Natural killer cell (primary cell): ENCODE measurements at regions of chr5 and their contacts with region 1.

Region 1: GRCh38 chr5:95858661-95859326 is 36.3 kb upstream of the GLRX start:
- DNase-seq: peak; percentile 83 to 92
- ATAC-seq: peak; percentile 96 to 97 (median 96)
- H3K4me3 ChIP-seq: no peak overlapping the region
- H3K4me3 Mint-ChIP-seq: peak overlapping the region; percentile 35
- H3K27ac ChIP-seq: no peak overlapping the region
- H3K27ac Mint-ChIP-seq: peak overlapping the region; percentile 8 to 61
- H3K4me1 ChIP-seq: peaks cover 19% of the 10 kb centered on the region
- H3K4me1 Mint-ChIP-seq: peaks cover 7 to 17% of the 10 kb centered on the region in 2 donors
- H3K27me3 ChIP-seq: peaks cover 2% of the 10 kb centered on the region
- H3K27me3 Mint-ChIP-seq: peaks cover 31 to 46% of the 10 kb centered on the region in 2 donors
- CTCF ChIP-seq: peak; percentile 97

Region 2: GRCh38 chr5:96142786-96143434 is 284.1 kb after region 1 on chr5:
- intact Hi-C with region 1: no loop called
- DNase-seq: no peak
- ATAC-seq: no peak
- H3K4me3 ChIP-seq: no peak overlapping the region
- H3K4me3 Mint-ChIP-seq: no peak overlapping the region
- H3K27ac ChIP-seq: no peak overlapping the region
- H3K27ac Mint-ChIP-seq: no peak overlapping the region
- H3K4me1 ChIP-seq: no peaks in the 10 kb centered on the region
- H3K4me1 Mint-ChIP-seq: no peaks in the 10 kb centered on the region
- H3K27me3 ChIP-seq: no peaks in the 10 kb centered on the region
- H3K27me3 Mint-ChIP-seq: peaks cover 6 to 19% of the 10 kb centered on the region in 2 donors
- CTCF ChIP-seq: no peak

Region 3: DNA sequence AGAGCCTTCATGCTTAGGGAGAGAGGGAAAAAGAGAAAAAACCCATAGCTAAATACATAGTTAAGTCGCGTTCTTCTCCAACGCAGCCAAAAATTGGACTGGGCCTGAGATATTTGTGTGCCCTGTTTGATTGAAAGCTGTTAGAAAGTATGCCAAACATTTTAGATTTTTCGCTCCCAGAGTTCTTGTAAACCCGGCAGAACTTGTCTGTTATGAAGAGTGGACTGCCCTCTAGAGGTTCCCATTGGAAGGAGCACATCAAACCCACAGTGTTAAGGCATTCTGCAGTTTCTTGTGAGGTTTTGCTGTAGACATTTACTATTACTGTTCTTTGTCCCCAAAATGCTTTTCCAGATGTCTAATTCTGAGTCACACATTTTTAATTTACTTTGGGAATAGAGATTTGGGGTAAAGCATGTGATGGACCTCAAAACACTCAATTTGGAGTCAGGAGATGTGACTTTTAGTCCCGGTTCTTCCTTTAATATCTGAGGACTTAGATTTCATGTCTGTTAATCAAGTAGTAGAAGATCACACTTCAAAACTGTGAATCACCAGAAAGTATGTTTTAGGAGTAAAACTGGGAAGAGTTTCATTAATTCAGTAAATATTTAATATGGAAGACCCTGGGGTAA is 477.7 kb after region 1 on chr5:
- intact Hi-C with region 1: loop called (anchors 1 kb)
- DNase-seq: peak in 1 of 2 donors; percentile 84
- ATAC-seq: peak; percentile 87 to 96 (median 91)
- H3K4me3 ChIP-seq: no peak overlapping the region
- H3K4me3 Mint-ChIP-seq: no peak overlapping the region
- H3K27ac ChIP-seq: no peak overlapping the region
- H3K27ac Mint-ChIP-seq: no peak overlapping the region
- H3K4me1 ChIP-seq: no peaks in the 10 kb centered on the region
- H3K4me1 Mint-ChIP-seq: no peaks in the 10 kb centered on the region
- H3K27me3 ChIP-seq: no peaks in the 10 kb centered on the region
- H3K27me3 Mint-ChIP-seq: peaks cover 12 to 32% of the 10 kb centered on the region in 2 donors
- CTCF ChIP-seq: peak; percentile 85

Region 4: GRCh38 chr5:96601811-96602244 is 743.0 kb after region 1 on chr5:
- intact Hi-C with region 1: loop called (anchors 1 kb)
- DNase-seq: peak in 1 of 2 donors; percentile 82
- ATAC-seq: peak; percentile 81 to 93 (median 90)
- H3K4me3 ChIP-seq: no peak overlapping the region
- H3K4me3 Mint-ChIP-seq: no peak overlapping the region
- H3K27ac ChIP-seq: no peak overlapping the region
- H3K27ac Mint-ChIP-seq: no peak overlapping the region
- H3K4me1 ChIP-seq: peaks cover 3% of the 10 kb centered on the region
- H3K4me1 Mint-ChIP-seq: no peaks in the 10 kb centered on the region
- H3K27me3 ChIP-seq: peaks cover 4% of the 10 kb centered on the region
- H3K27me3 Mint-ChIP-seq: peaks cover 4 to 15% of the 10 kb centered on the region in 2 donors
- CTCF ChIP-seq: peak; percentile 85